Dendritic cell treated with granulocyte-macrophage colony-stimulating factor and Interleukin-4, amounts not matched to agents 40 ng/mL and 50 ng/mL, for 4 days (primary cell): ENCODE measurements at regions of chr17 and their contacts with region 1.

Region 1: DNA sequence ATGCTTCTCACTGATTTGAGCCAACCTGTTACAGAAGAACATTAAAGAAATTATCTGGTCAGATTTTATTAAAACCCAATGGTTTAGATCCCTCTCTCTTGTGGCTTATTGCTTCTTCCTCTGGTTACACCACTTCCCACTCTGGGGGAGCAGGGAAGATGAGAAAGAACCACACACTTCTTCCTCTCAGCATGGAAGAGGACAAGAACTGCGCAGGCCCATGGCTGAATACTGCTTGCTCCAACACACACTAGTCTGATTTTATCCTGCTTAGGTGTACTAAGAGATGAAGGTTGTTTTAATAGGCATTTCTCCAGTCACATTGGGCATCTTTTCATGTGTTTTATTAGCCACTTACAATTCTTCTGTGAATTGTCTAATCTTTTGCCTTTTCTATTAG is 27.6 kb downstream of the MAP3K3 start:
- H3K4me3 Mint-ChIP-seq: no peak overlapping the region
- H3K27ac Mint-ChIP-seq: no peak overlapping the region
- H3K4me1 Mint-ChIP-seq: peaks cover 78% of the 10 kb centered on the region
- H3K27me3 Mint-ChIP-seq: no peaks in the 10 kb centered on the region

Region 2: DNA sequence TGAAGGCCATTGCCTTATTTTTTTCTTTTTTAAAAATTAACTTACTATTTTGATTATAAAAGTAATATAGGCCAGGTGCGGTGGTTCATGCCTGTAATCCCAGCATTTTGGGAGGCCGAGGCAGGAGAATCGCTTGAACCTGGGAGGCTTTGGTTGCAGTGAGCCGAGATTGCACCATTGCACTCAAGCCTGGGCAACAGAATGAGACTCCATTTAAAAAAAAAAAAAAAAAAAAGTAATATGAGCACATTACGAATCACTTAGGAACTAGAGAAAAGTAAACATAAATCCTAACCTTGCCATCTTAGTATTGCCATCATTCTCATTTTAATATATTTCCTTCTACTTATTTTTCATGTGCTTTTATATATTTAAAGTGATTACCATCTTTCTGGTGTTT is 62.0 kb before region 1 on chr17:
- intact Hi-C with region 1: no loop called
- H3K4me3 Mint-ChIP-seq: no peak overlapping the region
- H3K27ac Mint-ChIP-seq: no peak overlapping the region
- H3K4me1 Mint-ChIP-seq: no peaks in the 10 kb centered on the region
- H3K27me3 Mint-ChIP-seq: no peaks in the 10 kb centered on the region

Region 3: GRCh38 chr17:63621766-63622519 is 27.9 kb before region 1 on chr17 and contains the start of gene MAP3K3:
- intact Hi-C with region 1: loop called (anchors 2 kb)
- H3K4me3 Mint-ChIP-seq: peak within 1 kb of the TSS; percentile 99
- H3K27ac Mint-ChIP-seq: peak within 1 kb of the TSS; percentile 93
- H3K4me1 Mint-ChIP-seq: peaks cover 30% of the 10 kb centered on the region
- H3K27me3 Mint-ChIP-seq: peaks cover 6% of the 10 kb centered on the region